Right lobe of liver (tissue), 6 donors: ENCODE measurements at regions of chr11 and their contacts with region 1.

Region 1: GRCh38 chr11:9757809-9758636 is 94.1 kb downstream of the SWAP70 start:
- DNase-seq: peak; percentile 91 to 95 (median 91)
- ATAC-seq: peak; percentile 84 to 95 (median 90)
- H3K4me3 ChIP-seq: peak overlapping the region; percentile 59 to 81 (median 76)
- H3K27ac ChIP-seq: peak overlapping the region; percentile 60 to 77 (median 74)
- H3K4me1 ChIP-seq: peaks cover 0 to 6% (median 3%) of the 10 kb centered on the region in 4 donors
- H3K27me3 ChIP-seq: no peaks in the 10 kb centered on the region
- CTCF ChIP-seq: peak; percentile 82 to 96 (median 90)
- POLR2A ChIP-seq: peak; percentile 56

Region 2: GRCh38 chr11:9808943-9809342 is 50.9 kb after region 1 on chr11:
- intact Hi-C with region 1: no loop called
- DNase-seq: no peak
- ATAC-seq: no peak
- H3K4me3 ChIP-seq: no peak overlapping the region
- H3K27ac ChIP-seq: no peak overlapping the region
- H3K4me1 ChIP-seq: peaks cover 0 to 5% (median 0%) of the 10 kb centered on the region in 4 donors
- H3K27me3 ChIP-seq: no peaks in the 10 kb centered on the region
- CTCF ChIP-seq: no peak
- POLR2A ChIP-seq: no peak

Region 3: GRCh38 chr11:9825315-9825714 is 67.3 kb after region 1 on chr11:
- intact Hi-C with region 1: no loop called
- DNase-seq: no peak
- ATAC-seq: no peak
- H3K4me3 ChIP-seq: no peak overlapping the region
- H3K27ac ChIP-seq: no peak overlapping the region
- H3K4me1 ChIP-seq: no peaks in the 10 kb centered on the region
- H3K27me3 ChIP-seq: no peaks in the 10 kb centered on the region
- CTCF ChIP-seq: no peak
- POLR2A ChIP-seq: no peak

Region 4: GRCh38 chr11:9972989-9973388 is 215.0 kb after region 1 on chr11:
- intact Hi-C with region 1: loop called in 1 of 2 experiments (anchors 10 kb)
- DNase-seq: no peak
- ATAC-seq: peak; percentile 78 to 94 (median 82)
- H3K4me3 ChIP-seq: no peak overlapping the region
- H3K27ac ChIP-seq: no peak overlapping the region
- H3K4me1 ChIP-seq: no peaks in the 10 kb centered on the region
- H3K27me3 ChIP-seq: no peaks in the 10 kb centered on the region
- CTCF ChIP-seq: peak; percentile 66 to 73 (median 70)
- POLR2A ChIP-seq: no peak